Ascending aorta (tissue), 2 donors: ENCODE measurements at regions of chr2 and their contacts with region 1.

Region 1: GRCh38 chr2:85584857-85585783 is 889 bp downstream of the VAMP5 start:
- DNase-seq: peak in 1 of 2 donors; percentile 81
- H3K4me3 ChIP-seq: peak overlapping the region; percentile 61 to 74
- H3K27ac ChIP-seq: peak overlapping the region; percentile 84 to 95
- H3K4me1 ChIP-seq: peaks cover 0 to 39% of the 10 kb centered on the region in 2 donors
- H3K27me3 ChIP-seq: no peaks in the 10 kb centered on the region
- CTCF ChIP-seq: no peak

Region 2: GRCh38 chr2:85561317-85561979 is 23.7 kb before region 1 on chr2 and contains the start of gene GGCX:
- intact Hi-C with region 1: loop called (anchors 2 kb)
- DNase-seq: peak; percentile 82 to 97
- H3K4me3 ChIP-seq: peak within 1 kb of the TSS; percentile 77 to 79
- H3K27ac ChIP-seq: peak within 1 kb of the TSS; percentile 76 to 86
- H3K4me1 ChIP-seq: peaks cover 3 to 16% of the 10 kb centered on the region in 2 donors
- H3K27me3 ChIP-seq: no peaks in the 10 kb centered on the region
- CTCF ChIP-seq: peak in 2 of 3 experiments; percentile 10 to 35
- total RNA-seq, gene GGCX: 31.9 TPM

Region 3: GRCh38 chr2:85602476-85603234 is 17.5 kb after region 1 on chr2 and contains the start of gene TMEM150A:
- intact Hi-C with region 1: loop called (anchors 1 kb)
- DNase-seq: peak; percentile 89 to 97
- H3K4me3 ChIP-seq: peak within 1 kb of the TSS; percentile 86 to 87
- H3K27ac ChIP-seq: peak within 1 kb of the TSS; percentile 73 to 88
- H3K4me1 ChIP-seq: peaks cover 10 to 39% of the 10 kb centered on the region in 2 donors
- H3K27me3 ChIP-seq: no peaks in the 10 kb centered on the region
- CTCF ChIP-seq: peak; percentile 15 to 82 (median 36)
- total RNA-seq, gene TMEM150A: 26.7 TPM